Psoas muscle (tissue), 8 donors: ENCODE measurements at regions of chr9 and their contacts with region 1.

Region 1: GRCh38 chr9:19408693-19409400 is at the start of gene ACER2:
- DNase-seq: peak; percentile 96 to 97
- ATAC-seq: peak; percentile 96 to 98 (median 98)
- H3K4me3 ChIP-seq: peak within 1 kb of the TSS; percentile 88
- H3K27ac ChIP-seq: peak within 1 kb of the TSS; percentile 73
- H3K4me1 ChIP-seq: peaks cover 4% of the 10 kb centered on the region
- H3K27me3 ChIP-seq: no peaks in the 10 kb centered on the region
- CTCF ChIP-seq: peak; percentile 13
- total RNA-seq, gene ACER2: 1.3 to 2.4 (median 1.6) TPM

Region 2: GRCh38 chr9:19379697-19380046 is 29.2 kb before region 1 on chr9:
- intact Hi-C with region 1: loop called in 1 of 2 experiments (anchors 1 kb)
- DNase-seq: peak in 1 of 2 donors; percentile 71
- ATAC-seq: peak; percentile 47 to 72 (median 54)
- H3K4me3 ChIP-seq: peak overlapping the region; percentile 83
- H3K27ac ChIP-seq: peak overlapping the region; percentile 93
- H3K4me1 ChIP-seq: peaks cover 14% of the 10 kb centered on the region
- H3K27me3 ChIP-seq: no peaks in the 10 kb centered on the region
- CTCF ChIP-seq: no peak